ENCODE measurements at regions of chr17 and their contacts with region 1.

Region 1: DNA sequence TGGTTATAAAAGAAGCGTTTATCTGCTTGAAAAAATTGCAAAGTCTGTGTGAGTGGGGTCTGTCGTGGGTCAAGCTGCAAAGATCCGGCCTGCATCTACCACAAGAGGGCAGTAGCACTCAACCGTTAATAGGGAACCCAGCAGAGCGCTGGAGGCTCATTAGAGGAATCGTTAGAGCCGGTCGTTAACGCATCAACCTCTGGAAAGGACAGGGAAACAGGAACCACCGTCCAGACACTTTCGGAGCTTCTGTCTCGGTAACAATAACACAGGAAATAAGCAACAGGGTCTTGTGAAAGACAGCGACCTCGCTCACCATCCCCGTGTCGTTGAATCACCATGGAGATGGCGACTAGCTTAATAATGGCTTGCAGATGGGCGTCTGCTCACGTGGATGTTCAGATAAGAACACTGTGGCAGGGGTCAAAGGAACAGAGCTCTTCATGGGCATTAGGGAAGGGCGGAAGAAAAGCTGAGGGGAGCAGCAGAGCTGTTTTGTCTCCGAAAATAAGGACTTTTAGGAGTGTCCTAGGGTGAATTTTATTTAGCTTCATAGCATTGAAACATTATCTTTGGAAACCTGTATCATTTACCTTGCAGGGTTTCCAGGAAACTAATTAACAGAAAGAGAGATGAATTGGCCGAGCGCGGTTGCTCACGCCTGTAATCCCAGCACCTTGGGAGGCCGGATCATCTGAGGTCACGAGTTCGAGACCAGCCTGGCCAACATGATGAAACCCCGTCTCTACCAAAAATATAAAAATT is 11.9 kb upstream of the NSRP1 start:
- H3K4me3 ChIP-seq: peak overlapping the region; percentile 40
- H3K27ac ChIP-seq: peak overlapping the region; percentile 26; the same call in 1 of the 2 replicates
- H3K4me1 ChIP-seq: no peaks in the 10 kb centered on the region
- CTCF ChIP-seq: peak; percentile 83

Region 2: DNA sequence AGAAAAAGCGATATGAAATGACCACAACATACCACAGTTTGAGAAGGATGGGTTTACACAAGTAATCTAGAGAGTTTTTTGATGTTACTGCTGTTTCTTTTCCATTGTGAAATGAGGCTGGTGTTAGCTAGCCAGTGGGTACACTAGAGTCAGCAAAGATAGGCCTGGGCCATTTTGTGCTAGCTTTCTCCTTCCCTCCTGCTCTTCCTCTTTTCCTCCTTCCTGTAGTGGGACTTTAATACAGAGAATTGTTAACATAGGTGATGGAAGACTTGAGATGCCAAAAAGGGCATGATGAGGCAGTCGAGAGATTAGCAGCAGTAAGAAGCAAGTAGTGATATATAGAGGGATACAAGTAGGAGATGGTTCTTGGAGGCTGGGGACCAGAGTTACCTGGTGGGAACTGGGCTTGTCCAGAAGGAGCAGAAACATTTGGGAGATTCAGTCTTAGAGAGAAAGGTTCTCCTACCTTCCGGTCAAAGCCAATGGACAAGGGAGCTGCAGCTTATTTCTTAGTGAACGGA is 19.6 kb after region 1 on chr17:
- CTCF ChIA-PET with region 1: interaction called, 108 read pairs
- POLR2A ChIA-PET with region 1: interaction called, 5 read pairs
- H3K4me3 ChIP-seq: no peak overlapping the region
- H3K27ac ChIP-seq: no peak overlapping the region
- H3K4me1 ChIP-seq: no peaks in the 10 kb centered on the region
- CTCF ChIP-seq: no peak

Region 3: DNA sequence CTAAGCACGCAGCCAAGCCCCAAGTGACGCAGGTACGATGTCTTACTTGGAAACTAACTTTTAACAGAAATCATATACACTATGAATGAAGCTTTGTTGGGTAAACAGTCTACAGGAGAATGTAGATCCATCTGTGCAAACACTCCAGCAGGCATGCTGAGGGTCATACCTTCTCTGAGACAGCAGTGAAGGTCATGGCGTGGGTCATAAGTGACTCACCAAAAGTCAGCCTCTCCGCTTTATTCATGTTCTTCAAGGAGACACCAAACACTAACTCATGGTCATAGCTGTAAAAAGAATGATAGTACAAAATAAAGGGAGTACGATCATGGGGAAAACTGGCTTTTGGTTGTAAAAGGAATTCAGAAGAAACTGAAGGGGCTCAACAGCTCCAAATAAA is 166.3 kb after region 1 on chr17:
- CTCF ChIA-PET with region 1: interaction called, 11 read pairs
- POLR2A ChIA-PET with region 1: no interaction called
- H3K4me3 ChIP-seq: no peak overlapping the region
- H3K27ac ChIP-seq: no peak overlapping the region
- H3K4me1 ChIP-seq: no peaks in the 10 kb centered on the region
- CTCF ChIP-seq: no peak

Region 4: DNA sequence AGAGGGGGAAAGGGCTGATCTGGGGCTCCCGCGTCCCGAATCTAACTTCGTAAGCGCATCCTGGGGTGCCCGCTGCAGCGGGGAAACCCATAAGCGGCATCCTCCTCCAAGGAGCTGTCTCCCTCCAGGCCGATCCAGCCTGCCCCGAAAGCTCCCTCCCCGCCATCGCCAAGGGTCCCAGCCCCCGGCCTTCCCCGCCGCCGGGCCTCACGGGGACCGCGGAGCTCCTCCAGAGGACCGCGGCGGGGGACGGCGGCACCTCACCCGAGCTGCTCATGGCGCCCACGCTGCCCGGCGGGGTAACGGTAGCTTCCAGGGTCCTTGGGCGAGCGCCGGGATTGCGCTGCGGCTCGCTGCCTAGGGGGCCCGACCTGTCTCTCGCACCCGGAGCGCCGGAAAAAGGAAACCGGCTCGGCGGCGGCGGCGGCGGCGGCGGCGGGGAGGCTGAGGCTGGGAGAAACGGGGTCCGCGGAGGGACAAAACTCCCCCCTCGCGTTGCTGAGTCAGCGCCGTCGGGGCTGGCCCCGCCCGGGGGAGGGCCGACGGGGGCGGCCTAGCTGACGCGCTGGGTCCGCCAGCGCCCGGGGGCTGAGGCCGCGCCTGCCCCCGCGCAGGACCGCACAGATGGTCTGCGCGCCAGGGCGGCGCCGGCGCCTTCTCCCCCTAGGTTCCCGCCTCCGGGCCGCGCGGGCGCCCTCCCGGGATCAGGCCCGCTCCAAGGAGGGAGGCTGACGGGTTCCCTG is 187.0 kb after region 1 on chr17 and contains the start of gene BLMH:
- CTCF ChIA-PET with region 1: interaction called, 8 read pairs
- POLR2A ChIA-PET with region 1: interaction called, 12 read pairs
- H3K4me3 ChIP-seq: peak within 1 kb of the TSS; percentile 88
- H3K27ac ChIP-seq: peak within 1 kb of the TSS; percentile 85
- H3K4me1 ChIP-seq: no peaks in the 10 kb centered on the region; the same call in 1 of the 2 replicates
- CTCF ChIP-seq: no peak

Measured in HEK293 (cell line).